OCI-LY7 (cell line): ENCODE measurements at regions of chr3 and their contacts with region 1.

Region 1: GRCh38 chr3:135736740-135737139 is 228.8 kb upstream of the PPP2R3A start:
- DNase-seq: peak; percentile 37
- H3K4me3 ChIP-seq: no peak overlapping the region
- H3K27ac ChIP-seq: no peak overlapping the region
- H3K4me1 ChIP-seq: no peaks in the 10 kb centered on the region
- CTCF ChIP-seq: peak; percentile 69

Region 2: GRCh38 chr3:135895106-135895733 is 158.5 kb after region 1 on chr3:
- CTCF ChIA-PET with region 1: no interaction called
- POLR2A ChIA-PET with region 1: no interaction called
- intact Hi-C with region 1: loop called (anchors 1 kb)
- DNase-seq: peak; percentile 53
- H3K4me3 ChIP-seq: no peak overlapping the region
- H3K27ac ChIP-seq: no peak overlapping the region
- H3K4me1 ChIP-seq: no peaks in the 10 kb centered on the region
- CTCF ChIP-seq: peak; percentile 97

Region 3: DNA sequence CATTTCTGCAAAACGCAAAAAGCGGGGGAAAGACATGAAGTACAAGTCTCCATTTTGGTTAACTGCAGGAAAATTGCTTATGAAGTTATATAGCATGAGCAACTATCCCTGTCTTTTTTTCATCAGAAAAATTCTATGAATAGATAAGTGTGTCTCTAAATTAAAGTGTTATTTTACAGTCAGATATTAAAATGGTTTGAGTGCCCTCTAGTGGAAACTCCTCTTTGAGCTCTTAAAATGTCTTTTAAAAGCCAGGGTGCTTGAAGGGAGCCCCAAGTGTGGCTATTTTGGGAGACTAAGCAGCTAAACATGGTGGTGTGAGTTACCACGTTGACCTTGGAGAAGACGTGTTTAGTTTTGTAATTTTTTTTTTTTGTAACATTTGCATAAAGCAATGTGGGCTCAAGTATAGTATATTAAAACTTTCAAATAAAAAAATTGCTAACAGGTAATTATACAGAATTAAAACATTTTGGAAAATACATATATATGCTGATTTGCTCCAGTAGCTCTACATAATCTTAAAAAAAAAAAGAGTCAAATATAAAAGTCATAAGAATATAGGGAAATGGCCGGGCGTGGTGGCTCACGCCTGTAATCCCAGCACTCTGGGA is 306.0 kb after region 1 on chr3:
- CTCF ChIA-PET with region 1: interaction called, 3 read pairs
- POLR2A ChIA-PET with region 1: no interaction called
- intact Hi-C with region 1: loop called (anchors 10 kb)
- DNase-seq: peak; percentile 52
- H3K4me3 ChIP-seq: no peak overlapping the region
- H3K27ac ChIP-seq: no peak overlapping the region
- H3K4me1 ChIP-seq: no peaks in the 10 kb centered on the region
- CTCF ChIP-seq: peak; percentile 90